ENCODE measurements at regions of chr22 and their contacts with region 1.

Region 1: DNA sequence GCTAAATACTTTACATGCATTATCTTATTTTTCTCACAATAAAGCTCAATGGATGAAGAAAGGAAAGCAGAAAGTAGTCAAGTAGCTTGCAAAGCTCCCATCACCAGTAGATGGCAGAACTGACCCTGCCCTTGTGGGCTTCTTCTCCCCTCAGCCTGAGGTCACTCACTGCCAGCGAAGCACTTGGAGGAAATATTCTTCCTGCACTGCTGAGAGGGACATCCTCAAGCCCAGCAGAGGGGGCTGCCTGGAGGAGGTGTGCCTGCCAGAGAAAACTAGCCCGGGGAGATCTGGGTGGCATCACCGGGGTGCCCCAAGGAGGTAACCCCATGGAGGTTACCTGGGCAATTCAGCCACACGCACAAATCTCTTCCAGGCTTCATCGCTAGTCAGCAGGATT is 6.6 kb downstream of the APOL4 start:
- H3K4me3 Mint-ChIP-seq: no peak overlapping the region
- H3K27ac Mint-ChIP-seq: peak overlapping the region; percentile 25
- H3K4me1 Mint-ChIP-seq: peaks cover 76% of the 10 kb centered on the region
- H3K27me3 Mint-ChIP-seq: no peaks in the 10 kb centered on the region

Region 2: GRCh38 chr22:36239401-36240171 is 44.6 kb after region 1 on chr22 and contains the start of gene APOL2:
- intact Hi-C with region 1: loop called (anchors 5 kb)
- H3K4me3 Mint-ChIP-seq: peak within 1 kb of the TSS; percentile 98
- H3K27ac Mint-ChIP-seq: peak within 1 kb of the TSS; percentile 94
- H3K4me1 Mint-ChIP-seq: peaks cover 62% of the 10 kb centered on the region
- H3K27me3 Mint-ChIP-seq: peaks cover 1% of the 10 kb centered on the region

Region 3: DNA sequence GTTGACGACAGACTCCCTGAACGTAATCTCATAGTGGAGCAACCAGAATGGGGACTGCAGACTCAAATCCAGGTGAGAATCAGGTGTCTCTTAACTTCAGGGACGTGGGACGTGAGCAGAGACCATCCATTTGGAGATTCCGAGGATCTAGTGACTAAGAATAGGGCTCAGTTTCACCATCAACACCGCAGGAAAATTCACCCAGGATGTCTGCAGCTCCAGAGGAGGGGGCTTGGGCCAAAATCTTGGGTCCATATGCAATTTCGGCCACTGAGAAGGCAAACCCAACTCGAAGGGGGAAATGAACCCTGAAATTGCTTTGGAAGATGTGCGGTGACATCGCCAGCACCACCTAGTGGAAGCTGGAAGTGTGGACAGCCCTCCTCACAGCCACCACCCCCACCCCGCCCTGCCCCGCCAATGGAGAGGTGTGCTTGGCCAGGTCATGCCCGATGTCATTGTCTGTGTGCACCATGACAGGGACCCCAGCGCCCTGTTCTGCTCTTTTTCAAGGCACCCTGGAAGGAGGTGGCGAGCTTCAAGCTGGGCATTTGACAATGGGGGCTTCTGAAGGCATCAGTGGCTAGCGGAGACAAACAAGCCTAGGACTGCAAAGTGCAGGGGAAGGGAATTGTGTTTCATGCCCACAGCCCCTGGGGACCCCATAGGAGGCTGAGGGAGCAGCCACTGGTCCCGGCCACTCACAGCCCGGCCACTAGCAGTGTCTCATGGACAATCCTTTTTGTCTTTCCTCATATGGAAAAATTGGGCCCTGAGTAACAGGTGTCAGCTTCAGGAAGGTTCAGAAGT is 82.7 kb after region 1 on chr22:
- intact Hi-C with region 1: loop called (anchors 5 kb)
- H3K4me3 Mint-ChIP-seq: no peak overlapping the region
- H3K27ac Mint-ChIP-seq: no peak overlapping the region
- H3K4me1 Mint-ChIP-seq: peaks cover 44% of the 10 kb centered on the region
- H3K27me3 Mint-ChIP-seq: peaks cover 1% of the 10 kb centered on the region

Measured in dendritic cell treated with granulocyte-macrophage colony-stimulating factor and Interleukin-4, amounts not matched to agents 40 ng/mL and 50 ng/mL, for 4 days (primary cell).